ENCODE measurements at regions of chr3 and their contacts with region 1.

Region 1: DNA sequence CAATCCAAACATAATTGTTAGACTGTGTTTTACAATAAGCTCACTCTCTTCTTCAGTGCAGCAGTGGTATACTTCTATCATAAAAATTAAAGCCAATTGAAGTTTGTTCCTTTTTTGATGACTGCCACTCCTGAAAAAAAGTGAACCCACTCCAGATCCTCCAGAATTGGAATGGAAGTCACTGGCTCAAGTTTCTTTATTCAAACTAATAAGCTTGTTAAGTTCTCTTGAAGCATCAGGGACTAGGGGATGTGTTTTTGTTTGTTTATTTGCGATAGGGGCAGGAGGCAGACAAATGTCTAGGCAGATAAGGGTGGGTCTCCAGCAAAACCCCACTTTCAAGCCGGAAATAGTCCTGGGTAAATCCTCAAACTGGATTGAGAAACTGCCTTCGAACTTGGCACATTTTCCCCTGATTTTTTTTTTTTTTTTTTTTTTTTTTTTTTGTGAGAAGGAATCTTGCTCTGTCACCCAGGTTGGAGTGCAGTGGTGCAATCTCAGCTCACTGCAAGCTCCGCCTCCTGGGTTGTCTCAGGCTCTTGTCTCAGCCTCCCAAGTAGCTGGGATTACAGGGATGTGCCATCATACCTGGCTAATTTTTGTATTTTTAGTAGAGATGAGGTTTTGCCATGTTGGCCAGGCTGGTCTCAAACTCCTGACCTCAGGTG is 66.0 kb upstream of the PSMD6 start:
- DNase-seq: no peak
- H3K4me3 ChIP-seq: no peak overlapping the region
- H3K4me3 Mint-ChIP-seq: no peak overlapping the region
- H3K27ac Mint-ChIP-seq: no peak overlapping the region
- H3K4me1 ChIP-seq: peaks cover 36% of the 10 kb centered on the region
- H3K4me1 Mint-ChIP-seq: no peaks in the 10 kb centered on the region
- H3K27me3 ChIP-seq: no peaks in the 10 kb centered on the region
- H3K27me3 Mint-ChIP-seq: no peaks in the 10 kb centered on the region
- CTCF ChIP-seq: no peak

Region 2: DNA sequence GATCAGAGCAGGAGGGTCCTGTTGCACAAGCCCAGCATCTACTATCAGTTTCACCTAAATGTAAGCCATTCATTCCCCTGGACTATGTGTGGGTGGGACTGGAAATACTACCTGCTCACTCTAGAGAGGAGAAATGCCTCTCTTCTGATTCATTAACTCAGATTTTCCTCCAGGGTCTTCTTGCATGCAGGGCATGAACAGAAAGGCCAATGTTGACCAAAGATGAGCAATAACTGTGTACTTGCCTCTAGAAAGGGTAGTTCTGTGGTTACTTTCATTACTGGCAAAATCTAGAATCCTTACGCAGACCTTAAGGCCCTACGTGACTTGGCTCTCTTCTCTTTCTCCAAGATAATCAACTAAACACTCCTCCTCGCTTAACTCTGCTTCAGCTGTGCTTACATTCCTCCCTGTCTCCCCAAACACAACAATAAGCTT is 15.4 kb after region 1 on chr3:
- CTCF ChIA-PET with region 1: no interaction called
- POLR2A ChIA-PET with region 1: no interaction called
- intact Hi-C with region 1: loop called (anchors 2 kb)
- DNase-seq: no peak
- H3K4me3 ChIP-seq: no peak overlapping the region
- H3K4me3 Mint-ChIP-seq: no peak overlapping the region
- H3K27ac Mint-ChIP-seq: no peak overlapping the region
- H3K4me1 ChIP-seq: peaks cover 27% of the 10 kb centered on the region
- H3K4me1 Mint-ChIP-seq: peaks cover 12% of the 10 kb centered on the region
- H3K27me3 ChIP-seq: no peaks in the 10 kb centered on the region
- H3K27me3 Mint-ChIP-seq: no peaks in the 10 kb centered on the region
- CTCF ChIP-seq: no peak

Measured in Caco-2 (cell line).